ENCODE measurements at regions of chr19 and their contacts with region 1.

Region 1: GRCh38 chr19:3304871-3305423 is 61.4 kb upstream of the NFIC start:
- DNase-seq: peak; percentile 89
- ATAC-seq: peak; percentile 63
- H3K4me3 Mint-ChIP-seq: no peak overlapping the region
- H3K27ac Mint-ChIP-seq: no peak overlapping the region
- H3K4me1 Mint-ChIP-seq: no peaks in the 10 kb centered on the region
- H3K27me3 Mint-ChIP-seq: peaks cover 11% of the 10 kb centered on the region

Region 2: GRCh38 chr19:3154957-3155736 is 149.8 kb before region 1 on chr19:
- CTCF ChIA-PET with region 1: no interaction called
- POLR2A ChIA-PET with region 1: no interaction called
- intact Hi-C with region 1: no loop called
- DNase-seq: peak; percentile 92
- ATAC-seq: peak; percentile 95
- H3K4me3 Mint-ChIP-seq: no peak overlapping the region
- H3K27ac Mint-ChIP-seq: no peak overlapping the region
- H3K4me1 Mint-ChIP-seq: peaks cover 4% of the 10 kb centered on the region
- H3K27me3 Mint-ChIP-seq: no peaks in the 10 kb centered on the region

Region 3: DNA sequence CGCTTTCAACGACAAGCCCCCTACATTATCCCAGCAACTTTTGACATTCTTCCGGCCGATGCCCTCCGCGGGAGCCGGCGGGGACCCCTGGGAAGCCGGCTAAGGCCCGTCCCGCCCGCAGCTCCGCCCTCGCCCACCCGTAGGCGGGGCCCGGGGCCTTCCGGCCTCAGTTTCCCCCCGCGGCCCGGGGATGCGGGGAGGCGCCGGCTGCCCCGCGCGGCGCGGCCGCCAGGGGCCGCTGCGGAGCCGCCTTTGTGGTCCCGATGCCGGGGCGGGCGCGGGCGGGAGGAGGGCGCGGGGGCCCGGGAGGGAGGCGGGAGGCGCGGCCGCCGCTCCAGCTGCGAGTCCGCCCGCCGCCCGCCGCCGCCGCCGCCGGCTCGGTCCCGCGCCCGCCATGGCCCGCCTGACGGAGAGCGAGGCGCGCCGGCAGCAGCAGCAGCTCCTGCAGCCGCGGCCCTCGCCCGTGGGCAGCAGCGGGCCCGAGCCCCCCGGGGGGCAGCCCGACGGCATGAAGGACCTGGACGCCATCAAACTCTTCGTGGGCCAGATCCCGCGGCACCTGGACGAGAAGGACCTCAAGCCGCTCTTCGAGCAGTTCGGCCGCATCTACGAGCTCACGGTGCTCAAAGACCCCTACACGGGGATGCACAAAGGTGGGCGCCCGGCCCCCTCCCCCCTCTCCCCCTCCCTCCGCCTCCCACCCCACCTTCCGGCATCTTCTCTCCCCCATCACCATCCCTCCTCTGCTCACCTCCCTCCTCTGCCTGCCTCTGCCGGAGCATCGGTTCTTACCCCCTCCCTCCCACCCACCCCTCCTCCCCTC is 80.4 kb before region 1 on chr19 and contains the start of gene CELF5:
- CTCF ChIA-PET with region 1: interaction called, 3 read pairs
- POLR2A ChIA-PET with region 1: no interaction called
- intact Hi-C with region 1: loop called in 1 of 2 experiments (anchors 5 kb)
- DNase-seq: peak; percentile 77
- ATAC-seq: peak; percentile 77
- H3K4me3 Mint-ChIP-seq: no peak within 1 kb of the TSS
- H3K27ac Mint-ChIP-seq: no peak within 1 kb of the TSS
- H3K4me1 Mint-ChIP-seq: no peaks in the 10 kb centered on the region
- H3K27me3 Mint-ChIP-seq: peaks cover 24% of the 10 kb centered on the region
- total RNA-seq, gene CELF5: 0.18 to 0.21 TPM

Region 4: GRCh38 chr19:3471954-3472655 is 167.2 kb after region 1 on chr19:
- CTCF ChIA-PET with region 1: interaction called, 8 read pairs
- POLR2A ChIA-PET with region 1: interaction called, 3 read pairs
- intact Hi-C with region 1: loop called (anchors 1 to 5 kb)
- DNase-seq: peak; percentile 66
- ATAC-seq: peak; percentile 36
- H3K4me3 Mint-ChIP-seq: no peak overlapping the region
- H3K27ac Mint-ChIP-seq: no peak overlapping the region
- H3K4me1 Mint-ChIP-seq: no peaks in the 10 kb centered on the region
- H3K27me3 Mint-ChIP-seq: no peaks in the 10 kb centered on the region

Region 5: DNA sequence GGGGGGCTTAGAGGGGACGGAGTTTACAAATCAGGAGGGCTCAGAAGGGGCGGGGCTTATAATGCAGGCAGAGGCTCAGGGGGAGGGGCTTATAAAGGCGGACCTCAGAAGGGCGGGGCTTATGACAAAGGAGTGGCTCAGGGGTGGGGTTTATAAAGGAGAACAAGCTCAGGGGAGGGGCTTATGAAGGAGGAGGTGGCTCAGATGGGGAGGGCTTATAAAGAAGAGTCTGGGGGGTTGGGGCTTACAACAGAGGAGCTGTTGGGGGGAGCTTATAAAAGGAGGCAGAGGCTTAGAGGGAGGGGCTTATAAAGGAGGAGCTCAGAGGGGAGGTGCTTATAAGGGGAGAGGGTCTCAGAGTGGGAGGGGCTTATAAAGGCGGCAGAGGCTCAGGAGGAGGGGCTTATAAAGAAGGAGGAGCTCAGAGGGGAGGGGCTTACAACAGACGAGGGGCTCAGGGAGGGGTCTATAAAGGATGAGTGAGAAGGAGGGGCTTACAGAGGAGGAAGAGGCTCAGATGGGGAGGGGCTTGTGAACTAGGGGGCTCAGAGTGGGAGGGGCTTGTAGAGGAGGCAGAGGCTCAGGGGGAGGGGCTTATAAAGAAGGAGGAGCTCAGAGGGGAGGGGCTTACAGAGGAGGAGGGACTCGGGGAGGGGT is 174.4 kb after region 1 on chr19:
- CTCF ChIA-PET with region 1: interaction called, 13 read pairs
- POLR2A ChIA-PET with region 1: no interaction called
- intact Hi-C with region 1: loop called in 1 of 2 experiments (anchors 5 kb)
- DNase-seq: peak; percentile 68
- ATAC-seq: peak; percentile 77
- H3K4me3 Mint-ChIP-seq: no peak overlapping the region
- H3K27ac Mint-ChIP-seq: no peak overlapping the region
- H3K4me1 Mint-ChIP-seq: peaks cover 9% of the 10 kb centered on the region
- H3K27me3 Mint-ChIP-seq: no peaks in the 10 kb centered on the region

Measured in activated CD4-positive, alpha-beta T cell treated with anti-CD3 and anti-CD28 coated beads for 36 hours (primary cell).